Dendritic cell treated with granulocyte-macrophage colony-stimulating factor and Interleukin-4, amounts not matched to agents 40 ng/mL and 50 ng/mL, for 4 days (primary cell): ENCODE measurements at regions of chr17 and their contacts with region 1.

Region 1: GRCh38 chr17:3738562-3739295 is 15.0 kb downstream of the HASPIN start:
- H3K4me3 Mint-ChIP-seq: no peak overlapping the region
- H3K27ac Mint-ChIP-seq: peak overlapping the region; percentile 2
- H3K4me1 Mint-ChIP-seq: peaks cover 26% of the 10 kb centered on the region
- H3K27me3 Mint-ChIP-seq: peaks cover 3% of the 10 kb centered on the region

Region 2: GRCh38 chr17:3710951-3711383 is 27.8 kb before region 1 on chr17:
- intact Hi-C with region 1: no loop called
- H3K4me3 Mint-ChIP-seq: no peak overlapping the region
- H3K27ac Mint-ChIP-seq: peak overlapping the region; percentile 41
- H3K4me1 Mint-ChIP-seq: peaks cover 25% of the 10 kb centered on the region
- H3K27me3 Mint-ChIP-seq: no peaks in the 10 kb centered on the region

Region 3: GRCh38 chr17:3827124-3827773 is 88.5 kb after region 1 on chr17:
- intact Hi-C with region 1: loop called (anchors 1 kb)
- H3K4me3 Mint-ChIP-seq: no peak overlapping the region
- H3K27ac Mint-ChIP-seq: no peak overlapping the region
- H3K4me1 Mint-ChIP-seq: no peaks in the 10 kb centered on the region
- H3K27me3 Mint-ChIP-seq: no peaks in the 10 kb centered on the region

Region 4: DNA sequence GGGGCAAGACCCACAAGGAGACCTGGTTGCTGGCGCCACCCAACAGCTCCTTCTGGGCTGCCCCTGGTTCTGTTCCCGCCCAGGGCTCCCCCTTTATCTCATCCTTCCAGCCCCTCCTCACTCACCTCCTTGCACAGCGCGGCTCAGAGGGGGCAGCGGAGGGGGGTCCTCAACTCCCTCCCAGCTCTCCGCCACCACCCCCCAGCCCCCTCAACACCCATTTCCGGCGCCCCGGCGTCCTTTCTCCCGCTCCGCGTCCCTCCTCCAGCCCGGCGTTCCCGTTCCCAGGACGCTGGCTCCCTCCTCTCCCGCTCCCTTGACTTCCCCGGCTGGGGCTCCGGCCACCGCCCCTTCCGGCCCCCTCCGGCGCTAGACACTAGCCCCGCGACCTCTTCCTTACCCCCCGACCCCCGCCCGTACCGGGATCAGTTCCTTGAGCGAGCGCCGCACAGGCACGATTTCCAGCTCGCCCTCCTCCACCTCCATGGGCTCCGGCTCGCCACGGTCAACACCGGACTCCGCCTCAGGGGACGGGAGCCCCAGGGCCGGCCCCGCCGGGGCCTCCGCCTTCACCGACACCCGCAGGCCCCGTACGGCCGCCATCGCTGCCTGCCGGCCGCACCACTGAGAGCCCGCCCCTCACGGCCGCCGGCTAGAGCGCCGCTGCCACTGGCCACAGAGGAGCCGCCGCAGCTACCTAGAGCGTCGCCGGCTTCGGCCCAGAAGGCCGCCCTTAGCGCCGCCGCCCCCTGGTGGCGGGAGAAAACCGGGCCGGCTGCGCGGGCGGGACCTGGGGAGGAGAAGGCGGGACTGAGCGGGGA is 107.1 kb after region 1 on chr17 and contains the start of gene NCBP3:
- intact Hi-C with region 1: loop called (anchors 5 kb)
- H3K4me3 Mint-ChIP-seq: peak within 1 kb of the TSS; percentile 91
- H3K27ac Mint-ChIP-seq: peak within 1 kb of the TSS; percentile 93
- H3K4me1 Mint-ChIP-seq: peaks cover 36% of the 10 kb centered on the region
- H3K27me3 Mint-ChIP-seq: peaks cover 4% of the 10 kb centered on the region